AG04449 (cell line): ENCODE measurements at regions of chr20 and their contacts with region 1.

Region 1: GRCh38 chr20:47317127-47317895 is 39.2 kb downstream of the ZMYND8 start:
- DNase-seq: peak; percentile 90
- H3K4me3 ChIP-seq: no peak overlapping the region
- CTCF ChIP-seq: no peak

Region 2: DNA sequence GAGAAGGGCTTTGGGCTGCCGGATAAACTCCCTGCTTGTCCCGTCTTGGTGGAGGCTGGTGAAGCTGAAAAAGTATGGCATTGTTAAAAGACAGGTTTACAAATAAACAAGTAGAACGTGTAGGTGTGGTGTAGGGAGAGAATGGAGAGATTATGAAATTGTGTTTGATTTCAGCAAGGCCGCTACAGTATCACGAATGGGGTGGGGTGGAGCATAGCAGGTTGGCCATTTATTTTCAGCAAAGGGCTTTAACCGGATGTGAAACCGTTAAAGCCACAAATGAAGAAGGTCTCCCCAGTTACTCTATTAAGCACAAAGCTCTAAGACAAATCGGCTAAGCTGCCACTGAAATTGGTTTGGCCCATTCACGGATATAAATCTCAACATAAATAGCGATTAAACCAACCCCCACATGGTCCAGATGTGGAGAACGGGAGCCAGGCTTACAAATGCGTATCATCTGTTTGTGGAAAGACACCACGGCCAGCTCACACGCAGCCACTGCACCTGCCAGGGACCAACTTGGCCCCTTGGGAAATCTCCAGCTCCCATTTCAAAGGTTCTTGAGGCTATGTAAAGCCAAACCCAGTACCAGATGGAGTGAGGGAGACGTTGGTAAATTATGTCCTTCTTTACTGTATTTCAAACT is 54.8 kb before region 1 on chr20:
- CTCF ChIA-PET with region 1: no interaction called
- POLR2A ChIA-PET with region 1: no interaction called
- DNase-seq: no peak
- H3K4me3 ChIP-seq: no peak overlapping the region
- CTCF ChIP-seq: no peak

Region 3: DNA sequence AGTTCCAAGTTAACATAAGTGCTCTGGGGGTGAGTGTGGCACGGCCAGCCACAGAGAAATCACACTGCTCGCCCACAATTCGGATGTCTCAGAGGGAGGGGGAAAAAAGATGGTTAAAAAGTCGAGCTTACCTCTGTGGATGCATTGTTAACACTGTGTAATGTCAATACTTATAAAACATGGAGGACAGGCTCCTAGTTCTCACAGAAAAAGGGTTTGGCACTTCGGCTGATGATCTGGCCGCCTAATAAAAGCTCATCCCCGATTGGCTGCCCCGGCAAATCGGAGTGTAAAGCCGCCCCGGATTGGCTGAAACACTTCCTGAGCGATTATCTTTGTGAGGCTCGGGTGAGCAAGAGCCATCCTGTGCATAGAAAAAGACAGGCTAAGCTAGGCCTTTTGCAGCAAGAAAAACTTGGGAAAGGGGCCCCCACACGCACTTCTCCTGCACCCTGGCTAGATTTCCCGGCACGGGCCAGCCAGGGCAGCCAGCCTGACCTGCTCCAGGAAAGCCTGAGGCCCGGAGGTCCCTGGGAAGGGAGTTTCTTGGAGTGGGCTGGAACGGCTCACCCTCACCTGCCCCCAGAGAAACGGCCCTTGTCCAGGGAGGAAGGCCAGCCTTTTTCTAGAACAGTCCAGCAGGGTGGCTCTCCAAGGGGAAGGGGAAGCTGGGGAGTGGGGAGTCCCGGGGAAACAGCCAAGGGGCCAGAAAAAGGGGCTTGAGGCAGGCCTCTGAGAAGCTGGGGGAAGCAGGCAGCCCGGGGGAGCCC is 39.4 kb after region 1 on chr20 and contains the start of gene ZMYND8:
- CTCF ChIA-PET with region 1: interaction called, 4 read pairs
- POLR2A ChIA-PET with region 1: interaction called, 66 read pairs
- DNase-seq: no peak
- H3K4me3 ChIP-seq: peak within 1 kb of the TSS; percentile 52
- CTCF ChIP-seq: no peak